Ascending aorta (tissue), 2 donors: ENCODE measurements at regions of chr1 and their contacts with region 1.

Region 1: DNA sequence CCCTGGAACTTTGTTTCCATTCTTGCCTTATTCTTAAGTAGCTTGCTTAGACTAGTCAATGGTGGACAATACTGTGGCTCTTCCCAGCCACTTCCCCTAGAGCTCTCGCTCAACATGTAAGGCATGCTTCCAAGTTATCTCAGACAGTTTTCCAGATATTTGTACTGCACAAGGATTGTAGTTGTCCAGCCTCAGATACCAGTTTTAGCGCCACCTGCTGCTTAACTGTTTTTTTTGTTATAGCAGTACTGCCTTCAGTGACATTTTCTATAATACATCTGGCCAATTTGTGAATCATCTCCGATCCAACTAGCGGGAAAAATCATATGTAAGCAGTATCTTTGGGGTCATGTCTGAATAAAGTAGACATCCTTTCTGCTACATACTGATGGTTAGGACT is 346.7 kb upstream of the ADGRL4 start:
- DNase-seq: no peak
- H3K4me3 ChIP-seq: no peak overlapping the region
- H3K27ac ChIP-seq: no peak overlapping the region
- H3K4me1 ChIP-seq: no peaks in the 10 kb centered on the region
- H3K27me3 ChIP-seq: no peaks in the 10 kb centered on the region
- CTCF ChIP-seq: peak in 1 of 3 experiments; percentile 49

Region 2: DNA sequence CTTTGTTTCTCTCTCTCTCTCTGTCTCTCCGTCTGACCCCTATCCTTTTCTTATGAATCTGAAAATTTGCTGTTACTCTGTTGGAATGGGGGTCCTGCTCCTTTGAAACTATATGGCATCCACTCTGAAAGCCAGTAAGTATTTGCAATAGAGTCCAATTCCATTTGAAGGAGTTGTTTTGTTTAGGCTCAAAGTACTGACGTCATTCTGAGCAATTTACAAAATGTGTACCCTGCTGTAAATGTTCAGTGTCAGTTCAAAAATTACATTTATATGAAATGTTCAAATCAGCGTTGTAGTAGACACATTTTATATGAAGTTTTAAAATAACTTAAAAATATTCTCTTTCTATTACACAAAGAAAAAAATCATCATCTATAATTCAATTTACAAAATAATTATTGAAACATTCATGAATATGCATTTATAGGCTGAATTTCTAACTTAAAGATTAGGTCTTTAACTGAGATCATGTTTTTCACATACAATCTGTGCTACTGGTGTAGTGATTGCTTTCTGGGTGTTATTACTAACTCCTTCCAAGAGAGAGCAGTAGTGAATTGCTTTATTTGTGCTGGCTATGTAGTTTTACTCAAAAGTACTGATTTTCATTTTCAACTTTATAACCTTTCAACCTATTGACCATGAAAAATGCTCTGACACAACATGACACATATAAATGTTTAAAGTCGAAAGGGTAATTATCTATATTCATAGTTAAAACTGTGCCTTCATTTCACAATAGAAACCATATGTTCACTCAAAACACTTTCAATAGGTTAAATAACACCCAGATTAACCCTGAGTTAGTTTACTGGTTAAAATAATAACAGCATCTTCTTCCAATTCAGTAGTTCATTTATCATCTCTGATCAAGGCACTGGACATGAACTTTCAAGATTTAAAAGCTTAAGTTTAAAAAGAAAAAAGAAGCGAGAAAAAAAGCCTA is 93.6 kb before region 1 on chr1:
- intact Hi-C with region 1: loop called (anchors 1 kb)
- DNase-seq: no peak
- H3K4me3 ChIP-seq: no peak overlapping the region
- H3K27ac ChIP-seq: no peak overlapping the region
- H3K4me1 ChIP-seq: no peaks in the 10 kb centered on the region
- H3K27me3 ChIP-seq: no peaks in the 10 kb centered on the region
- CTCF ChIP-seq: peak in 2 of 3 experiments; percentile 54 to 60